Panc1 (cell line): ENCODE measurements at regions of chr4 and their contacts with region 1.

Region 1: GRCh38 chr4:188492886-188493285 is 353.6 kb downstream of the TRIML1 start:
- DNase-seq: no peak
- ATAC-seq: no peak
- H3K4me3 ChIP-seq: no peak overlapping the region
- H3K27ac ChIP-seq: no peak overlapping the region
- H3K4me1 ChIP-seq: no peaks in the 10 kb centered on the region
- H3K27me3 ChIP-seq: no peaks in the 10 kb centered on the region
- CTCF ChIP-seq: no peak

Region 2: GRCh38 chr4:188986271-188986689 is 493.4 kb after region 1 on chr4:
- CTCF ChIA-PET with region 1: no interaction called
- POLR2A ChIA-PET with region 1: no interaction called
- in situ Hi-C with region 1: no loop called
- intact Hi-C with region 1: no loop called
- DNase-seq: peak; percentile 24
- ATAC-seq: peak; percentile 72; the same call in 1 of the 2 replicates
- H3K4me3 ChIP-seq: no peak overlapping the region
- H3K27ac ChIP-seq: no peak overlapping the region
- H3K4me1 ChIP-seq: no peaks in the 10 kb centered on the region
- H3K27me3 ChIP-seq: no peaks in the 10 kb centered on the region
- CTCF ChIP-seq: no peak

Region 3: DNA sequence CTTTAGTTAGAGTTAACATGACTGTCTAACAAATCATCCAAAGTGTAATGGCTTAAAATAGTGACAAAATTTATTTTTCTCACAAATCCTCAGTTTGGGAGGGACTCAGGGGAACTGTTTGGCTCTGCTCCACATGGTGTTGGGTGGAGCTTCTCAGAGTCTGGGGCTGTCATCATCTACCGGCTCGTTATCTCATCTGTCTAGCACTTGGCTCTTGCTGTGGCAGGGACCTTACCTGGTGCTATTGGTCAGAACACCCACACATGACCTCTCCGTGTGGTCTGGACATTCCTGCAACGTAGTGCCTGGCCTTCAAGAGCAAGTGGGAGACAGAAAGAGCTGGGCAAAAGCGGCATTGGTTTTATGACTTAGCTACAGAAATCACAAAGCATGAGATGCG is 580.9 kb after region 1 on chr4:
- CTCF ChIA-PET with region 1: no interaction called
- POLR2A ChIA-PET with region 1: interaction called, 10 read pairs
- in situ Hi-C with region 1: no loop called
- intact Hi-C with region 1: no loop called
- DNase-seq: no peak
- ATAC-seq: no peak
- H3K4me3 ChIP-seq: no peak overlapping the region
- H3K27ac ChIP-seq: no peak overlapping the region
- H3K4me1 ChIP-seq: no peaks in the 10 kb centered on the region
- H3K27me3 ChIP-seq: no peaks in the 10 kb centered on the region
- CTCF ChIP-seq: no peak